ENCODE measurements at regions of chr10 and their contacts with region 1.

Region 1: GRCh38 chr10:52106899-52107298 is 207.2 kb upstream of the DKK1 start:
- DNase-seq: no peak
- ATAC-seq: peak in 3 of 4 donors; percentile 22 to 51 (median 48)
- H3K4me3 ChIP-seq: no peak overlapping the region
- H3K27ac ChIP-seq: peak overlapping the region; percentile 42
- H3K4me1 ChIP-seq: peaks cover 26% of the 10 kb centered on the region
- H3K27me3 ChIP-seq: no peaks in the 10 kb centered on the region
- CTCF ChIP-seq: no peak

Region 2: GRCh38 chr10:50310560-50311174 is 1796.2 kb before region 1 on chr10:
- intact Hi-C with region 1: no loop called
- DNase-seq: no peak
- ATAC-seq: peak in 1 of 4 donors; percentile 59
- H3K4me3 ChIP-seq: no peak overlapping the region
- H3K27ac ChIP-seq: no peak overlapping the region
- H3K4me1 ChIP-seq: no peaks in the 10 kb centered on the region
- H3K27me3 ChIP-seq: no peaks in the 10 kb centered on the region
- CTCF ChIP-seq: no peak

Region 3: DNA sequence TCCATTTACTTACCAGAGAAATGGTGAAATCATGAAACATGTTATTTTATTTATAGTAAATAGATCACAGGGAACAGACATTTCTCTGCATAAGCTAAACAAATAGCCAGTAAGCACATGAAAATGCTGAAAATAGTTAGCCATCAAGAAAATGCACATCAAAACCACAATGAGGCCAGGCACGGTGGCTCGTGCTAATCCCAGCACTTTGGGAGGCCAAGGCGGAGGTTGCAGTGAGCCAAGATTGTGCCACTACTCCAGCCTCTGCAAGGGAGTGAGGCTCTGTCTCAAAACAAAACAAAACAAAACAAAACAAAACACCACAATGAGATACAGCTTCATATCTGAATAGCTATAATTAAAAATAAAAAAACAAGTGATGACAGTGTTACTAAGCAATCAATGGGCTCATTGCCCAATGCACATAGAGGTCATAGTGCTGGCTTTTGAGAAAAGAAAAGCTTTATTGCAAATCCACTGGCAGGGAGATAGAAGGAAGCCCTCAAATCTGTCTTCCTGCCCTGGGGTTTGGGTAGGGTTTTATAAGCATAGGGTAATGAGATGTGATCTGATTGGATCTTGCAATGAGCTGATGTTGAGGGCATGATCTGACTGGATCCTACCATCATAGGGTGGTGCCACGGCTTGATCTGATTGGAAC is 423.7 kb before region 1 on chr10:
- intact Hi-C with region 1: no loop called
- DNase-seq: no peak
- ATAC-seq: peak in 3 of 4 donors; percentile 16 to 56 (median 37)
- H3K4me3 ChIP-seq: no peak overlapping the region
- H3K27ac ChIP-seq: no peak overlapping the region
- H3K4me1 ChIP-seq: no peaks in the 10 kb centered on the region
- H3K27me3 ChIP-seq: no peaks in the 10 kb centered on the region
- CTCF ChIP-seq: no peak

Region 4: GRCh38 chr10:51960494-51960895 is 146.4 kb before region 1 on chr10:
- intact Hi-C with region 1: no loop called
- DNase-seq: no peak
- ATAC-seq: peak; percentile 65 to 87 (median 76)
- H3K4me3 ChIP-seq: no peak overlapping the region
- H3K27ac ChIP-seq: no peak overlapping the region
- H3K4me1 ChIP-seq: peaks cover 4% of the 10 kb centered on the region
- H3K27me3 ChIP-seq: no peaks in the 10 kb centered on the region
- CTCF ChIP-seq: peak; percentile 57

Region 5: DNA sequence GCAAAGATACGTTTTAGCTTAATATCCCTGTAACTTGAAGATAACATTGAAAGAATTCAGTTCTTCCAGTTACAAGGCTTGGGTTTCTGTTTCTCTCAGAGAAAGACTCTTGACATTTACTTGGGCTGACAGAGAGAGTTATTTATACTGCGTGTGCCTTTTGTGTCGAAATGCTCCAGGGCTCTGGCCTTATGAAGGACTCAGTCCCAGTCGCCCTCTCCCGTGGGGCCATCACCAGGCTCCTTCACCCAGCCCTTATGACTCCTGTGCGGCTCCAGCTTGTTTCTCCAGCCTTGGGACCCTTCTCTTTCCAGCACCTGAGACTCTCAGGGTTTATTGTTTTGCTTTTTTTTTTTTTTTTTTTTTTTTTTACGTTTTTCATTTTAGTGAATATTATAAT is 35.1 kb before region 1 on chr10:
- intact Hi-C with region 1: loop called in 1 of 2 experiments (anchors 5 kb)
- DNase-seq: peak in 1 of 2 donors; percentile 63
- ATAC-seq: peak; percentile 95 to 99 (median 98)
- H3K4me3 ChIP-seq: peak overlapping the region; percentile 31
- H3K27ac ChIP-seq: peak overlapping the region; percentile 71
- H3K4me1 ChIP-seq: peaks cover 21% of the 10 kb centered on the region
- H3K27me3 ChIP-seq: no peaks in the 10 kb centered on the region
- CTCF ChIP-seq: no peak

Region 6: DNA sequence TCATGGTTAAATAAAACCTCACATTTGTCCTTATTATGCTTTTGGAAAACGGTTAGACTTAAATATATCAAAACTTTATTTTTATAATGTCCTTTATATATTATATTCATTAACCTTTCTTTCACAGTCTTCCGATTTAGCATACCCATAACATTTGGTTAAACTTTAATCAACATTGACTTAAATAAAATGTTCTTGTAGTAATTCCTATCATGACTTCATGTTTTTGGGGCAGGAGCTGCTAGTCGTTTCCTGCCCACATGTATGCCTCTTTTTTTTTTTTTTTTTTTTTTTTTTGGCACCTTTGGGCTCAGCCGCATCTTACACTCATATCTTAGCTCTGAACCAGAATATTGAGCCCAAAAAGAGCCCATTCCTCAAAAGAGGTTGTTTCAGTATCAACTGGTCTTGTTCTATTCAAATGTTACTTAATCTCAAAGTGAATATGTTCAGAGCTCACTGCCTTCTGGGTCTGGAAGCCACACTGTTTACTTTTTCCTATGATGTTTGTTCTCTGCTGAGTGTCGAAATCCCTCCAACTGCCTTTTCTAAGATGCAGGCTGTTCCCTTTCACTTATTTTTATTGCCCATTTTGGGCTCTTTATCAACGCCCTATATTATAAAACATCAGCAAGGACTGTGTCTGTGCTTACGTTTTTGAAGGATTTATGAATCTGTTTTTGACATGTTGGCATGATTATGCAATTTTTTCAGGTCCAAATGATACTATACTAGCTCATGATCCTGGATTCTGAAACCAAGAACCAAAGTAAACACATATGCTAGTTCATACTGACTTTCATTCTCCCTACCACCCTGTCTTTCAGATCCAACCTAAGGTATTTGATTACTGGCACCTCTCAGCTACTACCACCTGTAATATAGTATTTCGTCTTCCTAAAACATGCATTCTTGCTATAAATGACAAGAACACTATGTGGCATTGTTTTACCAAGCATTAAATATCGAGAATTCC is 1779.7 kb after region 1 on chr10:
- intact Hi-C with region 1: no loop called
- DNase-seq: no peak
- ATAC-seq: no peak
- H3K4me3 ChIP-seq: no peak overlapping the region
- H3K27ac ChIP-seq: no peak overlapping the region
- H3K4me1 ChIP-seq: no peaks in the 10 kb centered on the region
- H3K27me3 ChIP-seq: no peaks in the 10 kb centered on the region
- CTCF ChIP-seq: no peak